WTC11 (cell line): ENCODE measurements at regions of chr11 and their contacts with region 1.

Region 1: DNA sequence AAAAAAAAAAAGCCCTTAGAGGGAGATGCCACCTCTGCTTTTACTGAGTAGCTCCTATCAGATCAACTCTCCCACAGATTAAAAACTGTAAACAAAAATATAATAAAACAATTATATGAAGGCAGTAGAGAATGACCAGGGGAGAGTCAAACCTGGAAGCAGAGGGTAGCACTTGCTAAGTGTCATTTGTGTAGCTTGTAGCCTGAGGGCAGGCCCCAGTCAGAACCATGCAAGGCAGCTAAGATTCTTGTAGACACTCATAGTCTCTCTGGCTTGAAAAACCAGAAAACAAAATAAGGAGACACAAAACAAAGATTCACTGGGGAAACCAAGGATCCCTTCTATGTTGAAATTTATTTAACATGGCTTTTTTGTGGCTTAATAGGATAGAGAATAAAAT is 110.4 kb downstream of the WNT11 start:
- DNase-seq: no peak
- ATAC-seq: no peak
- H3K4me3 Mint-ChIP-seq: no peak overlapping the region
- H3K27ac Mint-ChIP-seq: no peak overlapping the region
- H3K4me1 Mint-ChIP-seq: 0 out of 2 replicates have a peak, but pooled peaks cover 5% of the 10 kb centered on the region
- H3K27me3 Mint-ChIP-seq: no peaks in the 10 kb centered on the region
- CTCF ChIP-seq: no peak

Region 2: GRCh38 chr11:76120513-76121101 is 24.7 kb after region 1 on chr11:
- CTCF ChIA-PET with region 1: no interaction called
- POLR2A ChIA-PET with region 1: interaction called, 10 read pairs
- DNase-seq: no peak
- ATAC-seq: peak; percentile 87
- H3K4me3 Mint-ChIP-seq: no peak overlapping the region
- H3K27ac Mint-ChIP-seq: no peak overlapping the region; the same call in 1 of the 2 replicates
- H3K4me1 Mint-ChIP-seq: peaks cover 7% of the 10 kb centered on the region
- H3K27me3 Mint-ChIP-seq: no peaks in the 10 kb centered on the region
- CTCF ChIP-seq: no peak